Panc1 (cell line): ENCODE measurements at regions of chr11 and their contacts with region 1.

Region 1: DNA sequence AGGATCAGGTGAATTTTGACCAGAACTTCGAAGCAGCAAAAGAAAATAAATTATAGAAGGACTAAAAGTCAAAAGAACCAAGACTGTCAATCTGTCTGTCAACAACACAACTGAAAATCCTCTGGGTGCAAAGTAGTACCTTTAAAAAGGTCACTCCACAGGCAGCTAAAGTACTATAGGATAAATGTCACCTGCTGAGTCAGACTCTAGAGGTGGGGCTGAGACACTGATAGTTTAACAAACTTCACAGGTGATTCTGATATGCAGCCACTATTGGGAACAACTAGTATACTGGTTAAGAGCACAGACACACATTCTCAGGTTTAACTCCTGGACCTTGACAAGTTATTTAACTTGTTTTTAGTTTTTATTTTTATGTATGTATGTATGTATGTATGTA is 107.3 kb downstream of the FCHSD2 start:
- DNase-seq: no peak
- ATAC-seq: no peak
- H3K4me3 ChIP-seq: no peak overlapping the region
- H3K27ac ChIP-seq: no peak overlapping the region
- H3K4me1 ChIP-seq: no peaks in the 10 kb centered on the region
- H3K27me3 ChIP-seq: no peaks in the 10 kb centered on the region
- CTCF ChIP-seq: no peak

Region 2: DNA sequence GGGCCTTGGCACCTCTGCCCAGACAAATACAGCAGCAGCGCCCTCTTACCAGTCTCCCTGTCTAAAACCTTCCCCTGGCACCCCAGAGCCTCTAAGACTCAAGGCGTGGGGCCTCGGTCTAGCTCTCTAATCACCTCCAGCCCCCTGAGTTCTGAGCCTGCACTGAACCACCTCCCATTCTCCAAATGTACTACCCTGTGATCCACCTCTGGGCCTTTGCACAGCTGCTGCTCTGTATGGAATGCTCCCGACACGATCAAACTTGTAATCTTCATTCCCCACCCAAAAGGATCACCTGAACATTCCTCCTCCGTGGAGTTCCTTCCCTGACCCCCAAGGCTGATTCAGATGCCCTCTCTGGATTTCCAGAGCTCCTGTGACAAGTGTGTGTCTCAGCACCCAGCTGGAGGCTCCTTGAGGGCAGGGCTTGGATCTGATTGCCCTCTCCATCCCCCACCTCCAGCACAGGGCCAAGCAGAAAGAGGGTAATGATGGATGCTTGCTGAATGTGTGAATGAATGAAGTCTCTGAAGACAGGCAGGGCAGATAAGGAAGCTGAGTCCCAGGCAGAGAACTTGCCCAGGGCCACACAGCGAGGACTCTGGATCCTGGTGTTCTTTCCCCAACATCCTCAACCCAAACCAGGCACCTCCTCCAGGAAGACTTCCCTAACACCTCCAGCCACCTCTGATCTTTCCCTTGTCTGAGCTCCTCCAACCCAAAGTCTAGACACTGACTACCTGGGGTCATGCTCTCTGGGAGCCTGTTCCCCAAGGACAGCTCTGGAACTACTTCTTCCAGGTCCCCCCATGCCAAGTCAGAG is 259.3 kb before region 1 on chr11:
- CTCF ChIA-PET with region 1: no interaction called
- POLR2A ChIA-PET with region 1: interaction called, 11 read pairs
- in situ Hi-C with region 1: no loop called
- intact Hi-C with region 1: no loop called
- DNase-seq: no peak
- ATAC-seq: no peak
- H3K4me3 ChIP-seq: no peak overlapping the region
- H3K27ac ChIP-seq: no peak overlapping the region
- H3K4me1 ChIP-seq: peaks cover 3% of the 10 kb centered on the region
- H3K27me3 ChIP-seq: no peaks in the 10 kb centered on the region
- CTCF ChIP-seq: no peak

Region 3: GRCh38 chr11:73135346-73136284 is 100.8 kb after region 1 on chr11:
- CTCF ChIA-PET with region 1: no interaction called
- POLR2A ChIA-PET with region 1: no interaction called
- in situ Hi-C with region 1: no loop called
- intact Hi-C with region 1: no loop called
- DNase-seq: no peak
- ATAC-seq: no peak
- H3K4me3 ChIP-seq: no peak overlapping the region
- H3K27ac ChIP-seq: no peak overlapping the region
- H3K4me1 ChIP-seq: peaks cover 13% of the 10 kb centered on the region
- H3K27me3 ChIP-seq: no peaks in the 10 kb centered on the region
- CTCF ChIP-seq: no peak

Region 4: DNA sequence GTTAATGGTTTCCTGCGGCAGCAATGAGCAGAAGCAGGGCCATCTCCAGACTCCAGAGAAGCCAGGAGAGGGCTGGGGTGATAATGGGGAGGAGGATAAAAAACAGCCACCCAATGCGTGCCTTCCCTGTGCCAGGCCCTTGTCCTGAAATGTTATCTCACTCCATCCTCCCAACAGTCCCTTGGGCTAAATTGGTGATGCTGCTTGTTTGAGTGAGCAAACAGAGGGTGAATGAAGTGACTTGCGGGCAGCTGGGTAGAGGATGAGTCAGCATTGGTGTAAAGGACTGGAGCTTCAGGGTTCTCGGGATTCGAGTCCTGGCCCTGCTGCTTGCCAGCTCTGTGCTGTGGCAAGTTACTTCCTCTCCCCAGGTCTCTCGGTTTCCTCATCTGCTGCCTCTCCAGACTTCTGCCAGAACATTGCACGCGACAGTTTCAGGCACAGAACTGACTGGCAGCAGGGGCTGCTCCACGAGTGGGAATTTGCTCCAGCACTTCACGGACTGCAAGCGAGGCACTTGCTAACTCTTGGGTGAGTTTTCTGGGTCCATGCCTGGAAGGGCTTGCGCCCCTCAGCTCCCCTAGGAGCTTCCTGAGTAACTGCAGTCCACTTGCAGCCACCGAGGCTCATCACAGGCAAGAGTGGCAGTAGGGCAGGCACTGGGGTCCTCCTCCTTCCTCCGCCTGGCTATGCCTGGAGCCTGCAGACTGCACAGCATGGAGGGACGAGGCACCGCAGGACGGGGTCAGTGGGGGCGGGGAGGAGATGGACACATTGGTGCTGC is 237.4 kb after region 1 on chr11 and contains the start of gene P2RY6:
- CTCF ChIA-PET with region 1: no interaction called
- POLR2A ChIA-PET with region 1: no interaction called
- in situ Hi-C with region 1: no loop called
- intact Hi-C with region 1: no loop called
- DNase-seq: no peak
- ATAC-seq: peak; percentile 85
- H3K4me3 ChIP-seq: no peak within 1 kb of the TSS
- H3K27ac ChIP-seq: peak within 1 kb of the TSS; percentile 70
- H3K4me1 ChIP-seq: peaks cover 15% of the 10 kb centered on the region
- H3K27me3 ChIP-seq: no peaks in the 10 kb centered on the region
- CTCF ChIP-seq: no peak
- total RNA-seq, gene P2RY6: 0.59 TPM